Left colon (tissue), 2 donors: ENCODE measurements at regions of chr6 and their contacts with region 1.

Region 1: GRCh38 chr6:26596579-26597388 is at the start of gene ABT1:
- DNase-seq: peak; percentile 98 to 99
- ATAC-seq: peak; percentile 98
- total RNA-seq, gene ABT1: 12.7 to 15.4 TPM

Region 2: DNA sequence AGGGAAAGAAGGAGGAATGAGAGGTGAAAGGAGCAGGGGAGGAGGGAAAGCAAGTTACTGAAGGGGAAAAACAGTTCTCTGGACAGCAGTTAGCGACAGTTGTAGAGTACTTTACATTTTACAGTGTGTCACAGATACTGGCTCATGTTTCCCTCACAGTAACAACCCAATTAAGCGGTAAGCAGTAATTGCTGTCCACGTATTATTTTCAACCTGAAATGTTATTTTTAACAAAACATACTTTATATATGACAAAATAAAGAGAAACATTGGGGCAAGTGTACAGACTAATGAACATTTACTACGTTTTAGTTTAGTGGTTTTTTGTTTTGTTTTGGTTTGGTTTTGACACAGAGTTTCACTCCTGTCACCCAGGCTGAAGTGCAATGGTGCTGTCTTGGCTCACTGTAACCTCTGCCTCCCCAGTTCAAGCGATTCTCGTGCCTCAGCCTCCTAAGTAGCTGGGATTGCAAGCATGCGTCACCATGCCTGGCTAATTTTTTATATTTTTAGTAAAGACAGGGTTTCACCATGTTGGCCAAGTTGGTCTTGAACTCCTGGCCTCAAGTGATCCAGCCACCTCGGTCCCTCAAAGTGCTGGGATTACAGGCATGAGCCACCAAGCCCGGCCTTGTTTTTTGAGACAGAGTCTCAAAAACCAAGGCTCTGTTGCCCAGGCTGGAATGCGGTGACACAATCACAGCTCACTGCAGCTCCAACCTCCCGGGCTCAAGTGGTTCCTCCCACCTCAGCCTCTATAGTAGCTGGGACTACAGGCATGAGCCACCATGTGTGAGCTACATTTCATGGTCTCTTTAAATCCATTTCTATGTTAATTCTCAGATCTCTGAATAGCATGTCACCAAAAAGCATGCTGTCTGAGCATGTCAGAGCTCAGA is 254.4 kb before region 1 on chr6:
- intact Hi-C with region 1: loop called in 1 of 2 experiments (anchors 5 kb)
- DNase-seq: no peak
- ATAC-seq: peak; percentile 15